Esophagus muscularis mucosa (tissue), 4 donors: ENCODE measurements at regions of chr10 and their contacts with region 1.

Region 1: GRCh38 chr10:77710759-77711682 is 73.4 kb upstream of the KCNMA1 start:
- DNase-seq: peak; percentile 93
- H3K4me3 ChIP-seq: peak overlapping the region; percentile 55 to 64 (median 57)
- H3K27ac ChIP-seq: peak overlapping the region in 1 of 4 donors; percentile 18
- H3K4me1 ChIP-seq: peaks cover 8 to 15% (median 13%) of the 10 kb centered on the region in 4 donors
- H3K27me3 ChIP-seq: peaks cover 0 to 14% (median 0%) of the 10 kb centered on the region in 4 donors
- CTCF ChIP-seq: peak in 2 of 3 experiments; percentile 92
- EP300 ChIP-seq: no peak
- POLR2A ChIP-seq: no peak

Region 2: GRCh38 chr10:77072836-77073662 is 638.0 kb before region 1 on chr10:
- intact Hi-C with region 1: no loop called
- DNase-seq: peak; percentile 92
- H3K4me3 ChIP-seq: no peak overlapping the region
- H3K27ac ChIP-seq: peak overlapping the region; percentile 16 to 62 (median 51)
- H3K4me1 ChIP-seq: peaks cover 0 to 59% (median 39%) of the 10 kb centered on the region in 4 donors
- H3K27me3 ChIP-seq: no peaks in the 10 kb centered on the region
- CTCF ChIP-seq: no peak
- EP300 ChIP-seq: no peak
- POLR2A ChIP-seq: no peak

Region 3: DNA sequence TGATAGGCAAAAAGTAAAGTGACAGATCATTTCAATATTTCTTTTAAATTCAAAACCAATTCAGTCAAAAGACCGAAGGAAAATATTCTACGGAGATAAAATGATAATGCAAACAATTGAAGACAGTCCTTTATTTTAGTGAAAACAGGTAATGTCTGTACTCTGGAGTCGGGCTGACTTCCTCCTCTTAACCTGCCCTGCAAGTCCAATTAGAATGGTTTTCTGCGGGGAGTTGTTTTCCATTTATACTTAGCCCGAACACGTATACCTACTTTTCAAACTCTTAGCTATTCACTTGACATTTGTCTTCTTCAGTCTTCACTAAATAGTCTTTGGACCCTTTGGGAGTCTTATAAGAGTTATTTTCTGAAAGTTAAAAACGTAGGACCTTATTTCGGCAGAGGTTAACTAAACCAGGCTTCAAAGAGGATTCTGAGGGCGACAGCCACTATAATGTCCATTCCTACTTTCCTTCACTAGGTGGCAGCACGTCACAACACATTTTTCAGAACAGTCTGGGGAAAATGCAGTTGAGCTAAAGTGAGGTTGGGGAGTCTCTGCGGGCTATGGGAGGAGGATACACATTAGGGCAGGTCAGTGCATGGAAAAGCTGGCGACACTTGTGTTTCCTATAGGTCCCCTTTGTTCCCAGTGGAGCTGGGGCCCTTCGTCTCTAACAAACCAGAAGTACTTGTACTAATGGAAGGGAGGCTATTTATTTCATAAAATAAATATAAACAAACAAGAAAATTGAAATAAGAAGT is 545.4 kb before region 1 on chr10:
- intact Hi-C with region 1: loop called (anchors 5 kb)
- DNase-seq: no peak
- H3K4me3 ChIP-seq: peak overlapping the region in 2 of 4 donors; percentile 6 to 30
- H3K27ac ChIP-seq: no peak overlapping the region
- H3K4me1 ChIP-seq: peaks cover 0 to 22% (median 19%) of the 10 kb centered on the region in 4 donors
- H3K27me3 ChIP-seq: no peaks in the 10 kb centered on the region
- CTCF ChIP-seq: peak; percentile 80 to 85 (median 84)
- EP300 ChIP-seq: no peak
- POLR2A ChIP-seq: no peak